Prostate gland (tissue), 2 donors: ENCODE measurements at regions of chr4 and their contacts with region 1.

Region 1: GRCh38 chr4:68175562-68176155 is 46.0 kb upstream of the TMPRSS11F start:
- DNase-seq: peak; percentile 41
- H3K4me3 ChIP-seq: no peak overlapping the region
- H3K27ac ChIP-seq: no peak overlapping the region
- H3K4me1 ChIP-seq: no peaks in the 10 kb centered on the region
- H3K27me3 ChIP-seq: no peaks in the 10 kb centered on the region
- CTCF ChIP-seq: peak in 3 of 4 experiments; percentile 62 to 71 (median 68)
- POLR2A ChIP-seq: no peak

Region 2: GRCh38 chr4:67746797-67747495 is 428.7 kb before region 1 on chr4:
- intact Hi-C with region 1: loop called (anchors 10 kb)
- DNase-seq: no peak
- H3K4me3 ChIP-seq: no peak overlapping the region
- H3K27ac ChIP-seq: no peak overlapping the region
- H3K4me1 ChIP-seq: no peaks in the 10 kb centered on the region
- H3K27me3 ChIP-seq: no peaks in the 10 kb centered on the region
- CTCF ChIP-seq: peak; percentile 42 to 57 (median 46)
- POLR2A ChIP-seq: no peak

Region 3: GRCh38 chr4:67983333-67983732 is 192.3 kb before region 1 on chr4:
- intact Hi-C with region 1: loop called (anchors 10 kb)
- DNase-seq: no peak
- H3K4me3 ChIP-seq: no peak overlapping the region
- H3K27ac ChIP-seq: no peak overlapping the region
- H3K4me1 ChIP-seq: no peaks in the 10 kb centered on the region
- H3K27me3 ChIP-seq: no peaks in the 10 kb centered on the region
- CTCF ChIP-seq: no peak
- POLR2A ChIP-seq: no peak